IMR-90 (cell line): ENCODE measurements at regions of chr11 and their contacts with region 1.

Region 1: DNA sequence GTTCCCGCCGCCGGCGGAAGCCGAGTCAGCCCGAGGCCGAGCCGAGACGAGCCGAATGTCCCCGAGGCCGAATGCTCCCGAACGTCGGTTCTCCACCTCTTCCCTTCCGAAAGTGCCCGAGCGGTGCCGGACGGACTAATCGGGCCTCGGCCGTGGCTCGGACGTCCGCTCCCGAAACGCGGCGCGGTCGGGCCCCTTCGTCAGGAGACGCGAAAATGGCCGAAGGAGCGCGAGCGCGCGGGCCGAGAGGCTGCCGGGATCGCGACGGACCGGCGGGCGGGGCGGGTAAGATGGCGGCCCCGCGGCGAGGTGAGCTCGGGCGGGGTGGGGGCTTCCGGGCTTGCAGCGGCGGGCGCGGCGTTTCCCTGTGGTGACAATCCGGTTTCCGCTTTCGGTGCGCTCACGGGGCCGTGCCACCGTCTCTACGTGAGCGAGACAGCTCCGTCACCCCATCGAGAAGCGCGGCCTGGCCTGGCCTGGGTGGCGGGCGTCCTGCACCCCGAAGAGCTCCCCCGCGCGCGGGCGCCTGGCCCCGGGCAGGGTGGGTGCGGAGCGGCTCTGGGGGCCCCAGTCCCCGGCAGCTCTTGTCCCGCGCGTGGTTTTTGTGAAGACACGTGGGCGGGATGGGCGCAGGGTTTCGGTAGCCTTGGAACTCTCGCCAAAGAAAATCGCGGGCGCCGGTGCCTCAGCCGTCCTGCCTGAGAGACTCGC is at the start of gene TMEM80:
- DNase-seq: peak; percentile 96
- ATAC-seq: peak; percentile 82
- H3K4me3 ChIP-seq: peak within 1 kb of the TSS; percentile 90
- H3K27ac ChIP-seq: peak within 1 kb of the TSS; percentile 99
- H3K4me1 ChIP-seq: peaks cover 36% of the 10 kb centered on the region
- H3K27me3 ChIP-seq: no peaks in the 10 kb centered on the region
- CTCF ChIP-seq: no peak
- POLR2A ChIP-seq: peak; percentile 68
- RAD21 ChIP-seq: no peak
- total RNA-seq, gene TMEM80: 5.0 and 5.6 TPM in 2 replicates

Region 2: GRCh38 chr11:727859-728748 is 32.4 kb after region 1 on chr11:
- CTCF ChIA-PET with region 1: no interaction called
- POLR2A ChIA-PET with region 1: no interaction called
- dilution Hi-C with region 1: no loop called
- in situ Hi-C with region 1: no loop called
- intact Hi-C with region 1: loop called (anchors 1 kb)
- DNase-seq: peak; percentile 72
- ATAC-seq: peak; percentile 81
- H3K4me3 ChIP-seq: no peak overlapping the region
- H3K27ac ChIP-seq: no peak overlapping the region
- H3K4me1 ChIP-seq: peaks cover 6% of the 10 kb centered on the region
- H3K27me3 ChIP-seq: peaks cover 10% of the 10 kb centered on the region; the same call in 1 of the 2 replicates
- CTCF ChIP-seq: peak; percentile 99
- POLR2A ChIP-seq: no peak
- RAD21 ChIP-seq: peak; percentile 62

Region 3: DNA sequence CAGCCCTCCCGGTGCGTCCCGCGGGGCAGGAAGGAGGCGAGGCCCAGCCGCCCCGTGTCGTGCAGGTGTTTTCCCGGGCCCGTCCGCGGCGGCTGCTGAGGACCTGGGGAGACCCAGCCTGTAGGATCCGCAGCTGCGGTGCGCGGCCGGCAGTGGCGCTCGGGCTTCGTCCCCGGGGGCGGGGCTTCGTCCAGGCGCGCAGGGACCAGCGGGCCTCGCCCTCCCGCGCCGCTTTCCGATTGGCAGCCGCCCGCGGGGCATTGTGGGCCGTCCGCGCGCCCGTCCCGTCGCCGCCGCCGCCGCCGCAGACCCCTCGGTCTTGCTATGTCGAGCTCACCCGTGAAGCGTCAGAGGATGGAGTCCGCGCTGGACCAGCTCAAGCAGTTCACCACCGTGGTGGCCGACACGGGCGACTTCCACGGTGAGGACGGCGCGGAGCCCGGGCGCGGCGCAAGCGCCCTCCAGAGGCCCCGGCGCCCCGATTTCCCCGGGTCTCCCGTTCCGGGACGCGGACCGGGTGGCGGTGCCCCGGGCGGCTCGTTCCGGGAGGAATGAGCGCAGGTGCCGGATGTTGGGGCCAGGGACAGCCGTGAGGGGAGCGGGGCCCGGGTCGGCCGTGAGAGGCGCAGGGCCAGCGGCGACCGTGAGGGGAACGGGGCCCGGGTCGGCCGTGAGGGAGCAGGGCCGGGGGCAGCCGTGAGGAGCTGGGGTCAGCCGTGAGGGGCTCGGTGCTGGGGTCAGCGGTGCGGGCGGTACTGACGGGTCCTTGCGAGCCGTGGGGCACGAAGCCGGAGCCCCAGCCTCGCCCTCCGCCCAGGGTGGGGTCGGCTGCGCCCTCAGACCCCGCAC is 51.7 kb after region 1 on chr11 and contains the start of gene TALDO1:
- CTCF ChIA-PET with region 1: no interaction called
- POLR2A ChIA-PET with region 1: interaction called, 20 read pairs
- dilution Hi-C with region 1: no loop called
- in situ Hi-C with region 1: no loop called
- intact Hi-C with region 1: loop called (anchors 1 kb)
- DNase-seq: peak; percentile 76
- ATAC-seq: peak; percentile 98
- H3K4me3 ChIP-seq: peak within 1 kb of the TSS; percentile 100
- H3K27ac ChIP-seq: peak within 1 kb of the TSS; percentile 94
- H3K4me1 ChIP-seq: peaks cover 9% of the 10 kb centered on the region
- H3K27me3 ChIP-seq: no peaks in the 10 kb centered on the region
- CTCF ChIP-seq: peak; percentile 32; the same call in 1 of the 2 replicates
- POLR2A ChIP-seq: peak; percentile 62
- RAD21 ChIP-seq: no peak
- total RNA-seq, gene TALDO1: 147 and 156 TPM in 2 replicates